Activated CD4-positive, alpha-beta T cell treated with anti-CD3 and anti-CD28 coated beads for 36 hours (primary cell): ENCODE measurements at regions of chr20 and their contacts with region 1.

Region 1: DNA sequence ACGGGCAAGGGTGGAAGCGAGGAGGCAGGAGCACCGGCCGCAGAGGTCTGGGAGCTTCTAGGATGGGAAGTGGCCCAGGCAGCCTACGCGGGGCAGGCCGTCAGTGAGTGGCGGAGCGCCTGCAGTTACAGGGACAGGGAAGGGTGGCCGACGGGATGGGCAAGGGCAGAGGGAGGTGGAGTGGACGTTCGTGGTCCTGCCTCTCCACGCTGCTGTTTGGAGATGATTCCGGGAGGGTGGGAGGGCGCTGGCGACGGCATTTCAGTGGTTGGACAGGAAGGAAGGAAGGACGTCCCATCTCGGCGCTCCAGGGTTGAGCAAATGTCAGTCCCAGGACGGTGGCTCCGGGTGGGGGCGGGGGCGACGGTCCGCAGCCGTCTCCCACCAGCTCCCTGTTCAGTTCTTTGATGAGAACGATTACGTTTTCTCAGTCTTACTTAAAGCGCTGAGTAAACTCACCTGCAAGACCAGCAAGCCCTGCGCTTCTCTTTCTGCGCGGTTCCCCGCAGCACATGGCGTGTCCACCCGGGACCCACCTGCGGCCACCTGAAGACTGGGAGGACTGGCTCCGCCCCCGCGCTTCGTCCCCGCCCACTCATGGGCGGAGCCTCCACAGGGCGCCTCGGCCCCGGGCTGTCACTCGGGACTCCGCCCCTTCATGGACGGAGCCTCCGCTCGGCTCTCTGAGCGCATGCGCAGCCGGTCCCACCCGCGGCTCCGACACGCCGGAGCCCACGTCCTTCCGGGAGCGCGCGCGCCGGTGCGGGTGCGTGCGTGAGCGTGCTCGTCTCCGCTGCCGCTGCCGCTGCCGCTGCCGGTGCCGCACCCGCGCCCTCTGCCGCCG is at the start of gene DNAJC5:
- DNase-seq: peak; percentile 98
- ATAC-seq: peak; percentile 86
- H3K4me3 Mint-ChIP-seq: peak within 1 kb of the TSS; percentile 95
- H3K27ac Mint-ChIP-seq: peak within 1 kb of the TSS; percentile 98
- H3K4me1 Mint-ChIP-seq: peaks cover 40% of the 10 kb centered on the region
- H3K27me3 Mint-ChIP-seq: no peaks in the 10 kb centered on the region
- total RNA-seq, gene DNAJC5: 30.1 to 34.3 TPM

Region 2: GRCh38 chr20:63553227-63553932 is 341.2 kb before region 1 on chr20:
- CTCF ChIA-PET with region 1: no interaction called
- POLR2A ChIA-PET with region 1: no interaction called
- intact Hi-C with region 1: loop called in 1 of 2 experiments (anchors 1 kb)
- DNase-seq: peak; percentile 95
- ATAC-seq: peak; percentile 88
- H3K4me3 Mint-ChIP-seq: no peak overlapping the region
- H3K27ac Mint-ChIP-seq: peak overlapping the region; percentile 45
- H3K4me1 Mint-ChIP-seq: peaks cover 11% of the 10 kb centered on the region
- H3K27me3 Mint-ChIP-seq: no peaks in the 10 kb centered on the region

Region 3: DNA sequence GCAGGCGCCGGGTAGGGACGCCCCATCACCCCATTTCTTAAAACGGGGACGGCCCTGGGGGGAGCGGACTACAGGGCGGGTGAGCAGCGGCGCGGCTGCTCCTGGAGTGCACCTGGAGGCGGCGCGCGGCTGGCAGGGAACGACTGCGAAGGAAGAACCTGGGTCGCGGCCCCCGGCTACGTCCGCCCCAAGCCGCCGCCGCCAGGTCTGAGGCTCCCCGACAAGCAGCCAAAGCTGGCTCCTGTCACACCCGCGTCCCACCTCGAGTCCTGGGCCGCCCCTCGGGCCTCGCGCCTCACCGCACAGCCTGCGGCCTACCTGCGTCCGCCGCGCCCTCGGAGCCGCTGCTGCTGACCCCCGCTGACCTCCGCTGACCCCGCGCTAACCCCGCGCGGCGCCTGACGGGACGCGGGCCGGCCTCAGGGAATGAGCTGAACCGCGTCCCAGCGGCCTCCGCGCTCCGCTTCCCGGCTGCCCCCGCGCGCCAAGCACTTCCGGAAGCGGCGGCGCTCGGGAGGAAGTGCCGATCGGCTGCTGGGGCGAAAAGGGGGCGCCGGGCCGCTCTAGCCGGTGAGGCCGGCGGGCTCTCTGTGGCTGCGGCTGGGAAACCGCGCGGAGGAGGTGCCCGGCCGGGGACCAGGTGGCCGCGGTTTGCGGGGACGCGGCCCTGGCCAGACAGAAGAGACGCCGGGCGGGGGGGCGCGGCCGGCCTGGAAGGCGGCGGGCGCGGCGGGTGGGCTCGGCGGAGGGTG is 186.9 kb before region 1 on chr20 and contains the starts of genes ARFRP1 and ZGPAT:
- CTCF ChIA-PET with region 1: no interaction called
- POLR2A ChIA-PET with region 1: no interaction called
- intact Hi-C with region 1: loop called in 1 of 2 experiments (anchors 1 kb)
- DNase-seq: peak; percentile 94
- ATAC-seq: peak; percentile 89
- H3K4me3 Mint-ChIP-seq: peak within 1 kb of the TSS; percentile 95
- H3K27ac Mint-ChIP-seq: peak within 1 kb of the TSS; percentile 90
- H3K4me1 Mint-ChIP-seq: peaks cover 44% of the 10 kb centered on the region
- H3K27me3 Mint-ChIP-seq: no peaks in the 10 kb centered on the region
- total RNA-seq, gene ARFRP1: 36.4 to 52.0 TPM
- total RNA-seq, gene ZGPAT: 15.3 to 21.9 TPM

Region 4: GRCh38 chr20:63819224-63819921 is 75.2 kb before region 1 on chr20:
- CTCF ChIA-PET with region 1: no interaction called
- POLR2A ChIA-PET with region 1: no interaction called
- intact Hi-C with region 1: no loop called
- DNase-seq: no peak
- ATAC-seq: no peak
- H3K4me3 Mint-ChIP-seq: peak overlapping the region; percentile 15
- H3K27ac Mint-ChIP-seq: no peak overlapping the region
- H3K4me1 Mint-ChIP-seq: no peaks in the 10 kb centered on the region
- H3K27me3 Mint-ChIP-seq: peaks cover 9% of the 10 kb centered on the region

Region 5: GRCh38 chr20:63873477-63873971 is 21.1 kb before region 1 on chr20:
- CTCF ChIA-PET with region 1: no interaction called
- POLR2A ChIA-PET with region 1: interaction called, 4 read pairs
- intact Hi-C with region 1: loop called in 1 of 2 experiments (anchors 1 kb)
- DNase-seq: peak; percentile 76
- ATAC-seq: peak; percentile 100
- H3K4me3 Mint-ChIP-seq: no peak overlapping the region
- H3K27ac Mint-ChIP-seq: peak overlapping the region; percentile 87
- H3K4me1 Mint-ChIP-seq: peaks cover 11% of the 10 kb centered on the region
- H3K27me3 Mint-ChIP-seq: no peaks in the 10 kb centered on the region

Region 6: GRCh38 chr20:63941282-63942060 is 46.9 kb after region 1 on chr20:
- CTCF ChIA-PET with region 1: no interaction called
- POLR2A ChIA-PET with region 1: no interaction called
- intact Hi-C with region 1: loop called in 1 of 2 experiments (anchors 1 kb)
- DNase-seq: peak; percentile 90
- ATAC-seq: peak; percentile 83
- H3K4me3 Mint-ChIP-seq: no peak overlapping the region
- H3K27ac Mint-ChIP-seq: peak overlapping the region; percentile 60
- H3K4me1 Mint-ChIP-seq: peaks cover 10% of the 10 kb centered on the region
- H3K27me3 Mint-ChIP-seq: no peaks in the 10 kb centered on the region

Region 7: GRCh38 chr20:63973636-63974402 is 79.2 kb after region 1 on chr20:
- CTCF ChIA-PET with region 1: interaction called, 5 read pairs
- POLR2A ChIA-PET with region 1: no interaction called
- intact Hi-C with region 1: loop called in 1 of 2 experiments (anchors 5 kb)
- DNase-seq: peak; percentile 89
- ATAC-seq: peak; percentile 34
- H3K4me3 Mint-ChIP-seq: no peak overlapping the region
- H3K27ac Mint-ChIP-seq: no peak overlapping the region
- H3K4me1 Mint-ChIP-seq: peaks cover 41% of the 10 kb centered on the region
- H3K27me3 Mint-ChIP-seq: no peaks in the 10 kb centered on the region

Region 8: DNA sequence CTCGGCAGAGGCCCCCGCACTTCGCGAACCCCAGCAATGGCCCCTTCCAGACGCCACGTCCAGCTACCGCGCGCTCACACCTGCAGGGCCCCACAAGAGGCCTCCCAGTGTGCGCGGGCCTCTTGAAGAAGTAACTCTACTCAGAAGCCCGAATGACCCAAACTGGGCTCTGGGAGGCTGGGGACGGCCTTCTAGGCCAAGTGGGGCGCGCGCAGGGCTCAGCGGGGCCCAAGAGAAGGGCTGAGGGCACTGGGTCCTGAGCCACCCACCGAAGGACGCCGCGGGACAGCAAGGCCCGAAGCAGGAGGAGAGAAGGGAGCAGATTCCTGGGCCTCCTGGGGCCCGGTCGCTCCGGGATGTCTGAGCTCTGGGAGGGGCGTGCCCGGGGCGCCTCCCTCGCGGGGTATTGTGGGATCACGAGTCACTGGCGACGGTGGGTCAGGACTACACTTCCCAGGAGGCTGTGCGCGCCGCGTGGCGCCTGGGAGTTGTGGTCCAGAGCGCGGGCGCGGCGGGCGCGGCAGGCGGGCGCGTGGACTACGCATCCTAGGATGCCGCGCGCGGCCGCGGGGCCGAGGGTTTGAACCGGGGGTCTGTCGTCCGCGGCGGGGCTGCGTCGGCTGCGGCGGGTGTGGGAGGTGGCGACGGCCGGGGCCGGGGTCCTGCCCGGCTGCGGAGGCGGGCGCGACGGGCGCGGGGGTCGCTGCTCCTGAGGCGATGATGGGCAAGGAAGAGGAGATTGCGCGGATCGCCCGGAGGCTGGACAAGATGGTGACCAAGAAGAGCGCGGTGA is 168.2 kb after region 1 on chr20 and contains the start of gene TCEA2:
- CTCF ChIA-PET with region 1: no interaction called
- POLR2A ChIA-PET with region 1: no interaction called
- intact Hi-C with region 1: loop called in 1 of 2 experiments (anchors 1 kb)
- DNase-seq: peak; percentile 98
- ATAC-seq: peak; percentile 83
- H3K4me3 Mint-ChIP-seq: peak within 1 kb of the TSS; percentile 82
- H3K27ac Mint-ChIP-seq: peak within 1 kb of the TSS; percentile 79
- H3K4me1 Mint-ChIP-seq: peaks cover 51% of the 10 kb centered on the region
- H3K27me3 Mint-ChIP-seq: no peaks in the 10 kb centered on the region
- total RNA-seq, gene TCEA2: 40.6 to 50.0 TPM